IMR-90 (cell line): ENCODE measurements at regions of chr11 and their contacts with region 1.

Region 1: GRCh38 chr11:64152841-64153691 is 12.8 kb downstream of the MACROD1 start:
- DNase-seq: peak; percentile 20
- ATAC-seq: peak; percentile 97
- H3K4me3 ChIP-seq: no peak overlapping the region
- H3K27ac ChIP-seq: no peak overlapping the region
- H3K4me1 ChIP-seq: no peaks in the 10 kb centered on the region; the same call in 1 of the 2 replicates
- H3K27me3 ChIP-seq: no peaks in the 10 kb centered on the region
- CTCF ChIP-seq: peak; percentile 94
- POLR2A ChIP-seq: no peak
- RAD21 ChIP-seq: peak; percentile 84

Region 2: DNA sequence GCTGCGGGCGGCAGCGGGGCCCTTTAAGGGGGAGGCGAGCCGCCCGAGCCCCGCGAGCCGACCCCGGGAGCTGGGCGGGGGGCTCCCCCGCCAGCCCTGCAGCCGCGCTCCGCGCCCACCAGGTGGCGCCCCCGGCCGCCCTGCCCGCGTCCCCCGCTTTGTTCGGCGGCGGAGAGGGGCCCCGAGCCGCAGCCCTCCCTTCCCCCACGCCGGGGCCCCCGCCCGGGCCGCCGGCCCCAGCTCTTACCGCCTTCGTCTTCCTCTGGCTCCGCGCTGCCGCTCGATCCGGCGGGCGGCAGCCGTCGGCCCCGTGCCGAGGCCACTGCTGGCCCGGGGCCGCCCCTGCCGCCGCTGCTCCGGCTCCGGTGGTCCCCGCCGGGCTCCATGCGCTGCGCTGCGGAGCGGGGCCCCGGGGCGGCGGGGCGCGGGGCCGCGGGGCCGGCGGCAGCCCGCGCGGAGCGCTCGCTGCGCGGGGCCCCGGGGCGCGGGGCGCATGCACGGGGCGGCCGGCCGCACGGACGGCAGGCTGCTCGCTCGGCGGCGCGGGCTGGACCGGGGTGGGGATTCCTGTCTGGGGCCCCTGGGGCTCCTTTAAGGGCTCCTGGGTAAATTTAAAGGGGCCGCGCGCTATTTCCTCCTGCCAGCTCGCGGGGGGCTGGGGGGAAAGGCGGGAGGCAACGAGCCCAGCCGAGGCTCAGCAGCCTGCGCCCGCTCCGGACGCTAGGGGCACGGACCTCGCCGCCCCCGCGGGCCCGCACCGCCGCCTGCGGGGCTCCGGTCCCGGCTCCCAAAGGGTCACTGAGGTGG is 384.6 kb before region 1 on chr11 and contains the start of gene ZFTA:
- CTCF ChIA-PET with region 1: no interaction called
- POLR2A ChIA-PET with region 1: no interaction called
- dilution Hi-C with region 1: no loop called
- in situ Hi-C with region 1: no loop called
- intact Hi-C with region 1: loop called (anchors 2 kb)
- DNase-seq: peak; percentile 37
- ATAC-seq: peak; percentile 53
- H3K4me3 ChIP-seq: peak within 1 kb of the TSS; percentile 59
- H3K27ac ChIP-seq: peak within 1 kb of the TSS; percentile 58
- H3K4me1 ChIP-seq: peaks cover 15% of the 10 kb centered on the region
- H3K27me3 ChIP-seq: no peaks in the 10 kb centered on the region
- CTCF ChIP-seq: peak; percentile 84
- POLR2A ChIP-seq: no peak
- RAD21 ChIP-seq: peak; percentile 72
- total RNA-seq, gene ZFTA: 5.4 and 7.2 TPM in 2 replicates

Region 3: DNA sequence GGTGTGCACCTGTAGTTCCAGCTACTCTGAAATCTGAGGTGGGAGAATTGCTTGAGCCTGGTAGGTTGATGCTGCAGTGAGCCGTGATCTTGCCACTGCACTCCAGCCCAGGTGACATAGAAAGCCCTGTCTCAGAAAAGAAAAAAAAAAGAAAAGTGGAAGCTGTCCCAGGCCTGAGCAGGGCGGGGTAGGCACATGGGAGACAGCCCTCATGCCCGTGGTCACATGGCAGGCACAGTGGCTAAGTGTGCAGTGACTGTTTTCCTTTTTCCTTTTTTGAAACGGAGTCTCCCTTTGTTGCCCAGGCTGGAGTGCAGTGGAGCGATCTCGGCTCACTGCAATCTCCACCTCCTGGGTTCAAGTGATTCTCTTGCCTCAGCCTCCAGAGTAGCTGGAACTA is 159.1 kb before region 1 on chr11:
- CTCF ChIA-PET with region 1: no interaction called
- POLR2A ChIA-PET with region 1: interaction called, 3 read pairs
- dilution Hi-C with region 1: no loop called
- in situ Hi-C with region 1: loop called (anchors 5 kb)
- intact Hi-C with region 1: no loop called
- DNase-seq: no peak
- ATAC-seq: no peak
- H3K4me3 ChIP-seq: no peak overlapping the region
- H3K27ac ChIP-seq: no peak overlapping the region
- H3K4me1 ChIP-seq: no peaks in the 10 kb centered on the region
- H3K27me3 ChIP-seq: no peaks in the 10 kb centered on the region
- CTCF ChIP-seq: no peak
- POLR2A ChIP-seq: no peak
- RAD21 ChIP-seq: no peak

Region 4: DNA sequence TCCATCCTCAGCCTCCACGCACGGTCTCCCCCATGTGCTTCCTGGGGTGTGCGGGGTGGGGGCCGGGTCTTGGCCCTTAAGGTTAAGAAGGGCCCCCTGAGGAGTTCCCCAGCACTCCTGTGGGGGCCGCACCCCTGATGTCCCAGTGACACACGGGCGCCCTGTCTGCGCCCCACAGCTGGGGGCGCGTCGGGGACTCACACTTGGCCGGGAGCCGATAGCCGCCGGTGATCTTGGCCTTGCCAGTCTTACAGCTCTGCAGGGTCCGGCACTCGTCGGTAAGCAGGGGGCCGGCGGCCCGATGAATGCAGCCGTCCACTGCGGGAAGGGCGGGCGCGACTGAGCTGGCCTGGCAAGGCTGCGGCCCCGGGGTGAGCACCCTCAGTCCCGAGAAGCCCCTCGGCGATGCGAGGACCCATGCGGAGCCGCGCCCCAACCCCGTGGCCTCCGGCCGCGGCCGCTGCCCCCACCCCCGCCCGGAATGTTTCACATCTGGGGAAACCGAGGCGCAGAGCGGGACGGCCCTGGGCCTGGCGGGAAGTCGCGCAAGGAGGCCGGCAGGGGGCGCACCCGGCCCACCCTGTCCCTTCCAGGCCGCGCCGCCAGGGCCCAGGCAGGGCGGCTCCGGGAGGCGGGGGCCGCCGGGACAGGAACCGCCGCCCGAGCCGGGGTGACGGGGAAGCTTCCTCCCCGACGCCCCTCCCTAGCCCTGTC is 152.9 kb before region 1 on chr11:
- CTCF ChIA-PET with region 1: interaction called, 4 read pairs
- POLR2A ChIA-PET with region 1: interaction called, 3 read pairs
- dilution Hi-C with region 1: no loop called
- in situ Hi-C with region 1: no loop called
- intact Hi-C with region 1: loop called (anchors 1 kb)
- DNase-seq: peak; percentile 59
- ATAC-seq: peak; percentile 87
- H3K4me3 ChIP-seq: no peak overlapping the region
- H3K27ac ChIP-seq: no peak overlapping the region
- H3K4me1 ChIP-seq: 0 out of 2 replicates have a peak, but pooled peaks cover 1% of the 10 kb centered on the region
- H3K27me3 ChIP-seq: no peaks in the 10 kb centered on the region
- CTCF ChIP-seq: peak; percentile 78
- POLR2A ChIP-seq: no peak
- RAD21 ChIP-seq: peak; percentile 85

Region 5: GRCh38 chr11:64040684-64041322 is 112.3 kb before region 1 on chr11:
- CTCF ChIA-PET with region 1: interaction called, 4 read pairs
- POLR2A ChIA-PET with region 1: no interaction called
- dilution Hi-C with region 1: no loop called
- in situ Hi-C with region 1: no loop called
- intact Hi-C with region 1: loop called (anchors 1 kb)
- DNase-seq: no peak
- ATAC-seq: no peak
- H3K4me3 ChIP-seq: no peak overlapping the region
- H3K27ac ChIP-seq: no peak overlapping the region
- H3K4me1 ChIP-seq: no peaks in the 10 kb centered on the region
- H3K27me3 ChIP-seq: no peaks in the 10 kb centered on the region; the same call in 1 of the 2 replicates
- CTCF ChIP-seq: peak; percentile 42
- POLR2A ChIP-seq: no peak
- RAD21 ChIP-seq: peak; percentile 58